Heart left ventricle (tissue), 16 donors: ENCODE measurements at regions of chr6 and their contacts with region 1.

Region 1: GRCh38 chr6:132973514-132973993 is 159.2 kb downstream of the RPS12 start:
- DNase-seq: no peak
- ATAC-seq: no peak
- H3K4me3 ChIP-seq: no peak overlapping the region
- H3K27ac ChIP-seq: no peak overlapping the region
- H3K4me1 ChIP-seq: peaks cover 0 to 3% (median 0%) of the 10 kb centered on the region in 12 donors
- H3K27me3 ChIP-seq: no peaks in the 10 kb centered on the region
- CTCF ChIP-seq: no peak
- POLR2A ChIP-seq: no peak

Region 2: GRCh38 chr6:133033263-133033662 is 59.7 kb after region 1 on chr6:
- intact Hi-C with region 1: loop called in 2 of 10 experiments (anchors 10 kb)
- DNase-seq: no peak
- ATAC-seq: no peak
- H3K4me3 ChIP-seq: no peak overlapping the region
- H3K27ac ChIP-seq: no peak overlapping the region
- H3K4me1 ChIP-seq: no peaks in the 10 kb centered on the region
- H3K27me3 ChIP-seq: no peaks in the 10 kb centered on the region
- CTCF ChIP-seq: no peak
- POLR2A ChIP-seq: no peak

Region 3: GRCh38 chr6:133040094-133040802 is 66.7 kb after region 1 on chr6:
- intact Hi-C with region 1: loop called in 3 of 10 experiments (anchors 5 to 10 kb)
- DNase-seq: no peak
- ATAC-seq: peak in 1 of 4 donors; percentile 20
- H3K4me3 ChIP-seq: no peak overlapping the region
- H3K27ac ChIP-seq: peak overlapping the region in 6 of 12 donors; percentile 9 to 71 (median 30)
- H3K4me1 ChIP-seq: peaks cover 0 to 11% (median 0%) of the 10 kb centered on the region in 12 donors
- H3K27me3 ChIP-seq: no peaks in the 10 kb centered on the region
- CTCF ChIP-seq: peak in 9 of 12 donors; percentile 12 to 48 (median 35)
- POLR2A ChIP-seq: no peak

Region 4: GRCh38 chr6:133062077-133062476 is 88.5 kb after region 1 on chr6:
- intact Hi-C with region 1: no loop called
- DNase-seq: peak in 4 of 5 donors; percentile 30 to 48 (median 43)
- ATAC-seq: peak; percentile 93 to 98 (median 97)
- H3K4me3 ChIP-seq: no peak overlapping the region
- H3K27ac ChIP-seq: peak overlapping the region in 11 of 12 donors; percentile 34 to 81 (median 72)
- H3K4me1 ChIP-seq: peaks cover 0 to 17% (median 2%) of the 10 kb centered on the region in 12 donors
- H3K27me3 ChIP-seq: no peaks in the 10 kb centered on the region
- CTCF ChIP-seq: no peak
- POLR2A ChIP-seq: no peak